Activated CD8-positive, alpha-beta T cell treated with anti-CD3 and anti-CD28 coated beads for 36 hours (primary cell): ENCODE measurements at regions of chr16 and their contacts with region 1.

Region 1: GRCh38 chr16:52191531-52192134 is 355.3 kb downstream of the TOX3 start:
- DNase-seq: peak; percentile 67
- ATAC-seq: no peak
- H3K4me3 Mint-ChIP-seq: no peak overlapping the region
- H3K27ac Mint-ChIP-seq: no peak overlapping the region
- H3K4me1 Mint-ChIP-seq: no peaks in the 10 kb centered on the region
- H3K27me3 Mint-ChIP-seq: no peaks in the 10 kb centered on the region
- CTCF ChIP-seq: peak; percentile 89

Region 2: DNA sequence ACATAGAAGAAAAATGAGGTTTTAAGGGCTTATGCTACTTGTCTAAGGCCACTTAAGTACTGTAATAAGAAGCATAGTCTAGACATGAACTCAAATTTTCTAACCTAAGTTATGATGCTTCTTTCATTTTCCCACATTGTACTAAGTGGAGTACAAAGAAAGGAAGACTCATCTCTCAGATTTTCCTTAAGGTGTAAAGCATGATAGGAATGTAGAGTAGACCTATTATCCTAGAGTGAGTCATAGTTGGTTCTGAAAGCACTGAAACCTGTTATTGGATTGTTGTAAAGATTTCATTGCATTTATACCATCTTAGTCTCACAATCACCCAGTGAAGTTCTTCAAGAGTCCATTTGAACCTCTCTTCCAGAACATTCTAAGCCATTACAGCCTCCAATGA is 11.5 kb after region 1 on chr16:
- CTCF ChIA-PET with region 1: interaction called, 13 read pairs
- POLR2A ChIA-PET with region 1: no interaction called
- intact Hi-C with region 1: no loop called
- DNase-seq: no peak
- ATAC-seq: no peak
- H3K4me3 Mint-ChIP-seq: no peak overlapping the region
- H3K27ac Mint-ChIP-seq: no peak overlapping the region
- H3K4me1 Mint-ChIP-seq: no peaks in the 10 kb centered on the region
- H3K27me3 Mint-ChIP-seq: peaks cover 7% of the 10 kb centered on the region
- CTCF ChIP-seq: no peak

Region 3: DNA sequence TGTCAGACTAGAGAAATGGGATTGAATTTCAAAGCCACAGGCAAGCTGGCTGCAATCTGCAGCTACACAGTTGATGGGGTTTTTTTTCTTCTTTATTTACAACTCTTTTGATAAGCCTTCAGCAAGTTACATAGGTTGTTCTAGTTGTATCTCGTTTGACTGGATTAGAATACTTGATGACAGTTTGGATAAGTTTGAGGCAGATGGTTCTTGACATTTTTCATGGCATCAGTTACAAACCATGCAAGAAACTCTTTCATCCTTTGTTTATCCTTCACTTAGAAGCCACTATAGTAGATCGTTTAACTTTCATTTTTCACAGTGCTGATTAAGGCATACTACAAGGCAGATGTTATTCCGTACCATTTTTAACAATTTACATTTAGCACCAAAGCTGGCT is 116.4 kb after region 1 on chr16:
- CTCF ChIA-PET with region 1: no interaction called
- POLR2A ChIA-PET with region 1: no interaction called
- intact Hi-C with region 1: no loop called
- DNase-seq: no peak
- ATAC-seq: no peak
- H3K4me3 Mint-ChIP-seq: no peak overlapping the region
- H3K27ac Mint-ChIP-seq: no peak overlapping the region
- H3K4me1 Mint-ChIP-seq: peaks cover 6% of the 10 kb centered on the region
- H3K27me3 Mint-ChIP-seq: no peaks in the 10 kb centered on the region
- CTCF ChIP-seq: no peak

Region 4: GRCh38 chr16:52497067-52497816 is 305.6 kb after region 1 on chr16:
- CTCF ChIA-PET with region 1: no interaction called
- POLR2A ChIA-PET with region 1: no interaction called
- intact Hi-C with region 1: no loop called
- DNase-seq: no peak
- ATAC-seq: no peak
- H3K4me3 Mint-ChIP-seq: no peak overlapping the region
- H3K27ac Mint-ChIP-seq: no peak overlapping the region
- H3K4me1 Mint-ChIP-seq: no peaks in the 10 kb centered on the region
- H3K27me3 Mint-ChIP-seq: no peaks in the 10 kb centered on the region
- CTCF ChIP-seq: no peak

Region 5: DNA sequence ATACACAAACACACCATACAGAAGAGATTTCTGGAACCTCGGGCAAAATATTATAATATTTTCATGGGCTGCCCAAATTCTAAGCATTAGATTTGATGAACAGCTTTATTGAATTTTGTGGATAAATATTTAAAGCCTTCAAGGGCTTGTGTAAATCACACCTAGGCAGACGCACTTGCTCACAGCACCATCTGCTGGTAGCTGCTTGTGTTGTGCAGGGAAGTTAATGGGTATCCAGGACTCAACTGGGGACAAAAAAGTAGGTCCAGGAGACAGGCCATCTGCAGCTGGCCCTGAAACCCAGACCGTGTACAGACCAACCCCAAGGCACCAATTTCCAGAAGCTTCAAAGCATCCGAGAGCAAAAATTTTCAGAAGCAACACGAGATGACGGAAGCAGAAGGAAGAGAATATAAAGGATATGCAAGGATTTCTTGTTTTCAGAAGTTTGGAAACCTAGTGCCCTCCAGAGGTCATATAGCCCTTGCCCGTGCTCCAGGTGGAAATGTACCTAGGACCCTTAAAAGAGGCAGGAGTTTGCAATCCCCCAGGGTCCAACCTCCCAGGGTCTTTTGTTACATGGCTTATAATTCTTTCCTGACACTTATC is 721.0 kb after region 1 on chr16:
- CTCF ChIA-PET with region 1: interaction called, 25 read pairs
- POLR2A ChIA-PET with region 1: interaction called, 4 read pairs
- intact Hi-C with region 1: loop called (anchors 5 kb)
- DNase-seq: peak; percentile 66
- ATAC-seq: no peak
- H3K4me3 Mint-ChIP-seq: no peak overlapping the region
- H3K27ac Mint-ChIP-seq: no peak overlapping the region
- H3K4me1 Mint-ChIP-seq: no peaks in the 10 kb centered on the region
- H3K27me3 Mint-ChIP-seq: peaks cover 4% of the 10 kb centered on the region
- CTCF ChIP-seq: peak; percentile 76

Region 6: GRCh38 chr16:53022374-53022773 is 830.7 kb after region 1 on chr16:
- CTCF ChIA-PET with region 1: interaction called, 5 read pairs
- POLR2A ChIA-PET with region 1: no interaction called
- intact Hi-C with region 1: loop called (anchors 10 kb)
- DNase-seq: peak; percentile 12
- ATAC-seq: no peak
- H3K4me3 Mint-ChIP-seq: no peak overlapping the region
- H3K27ac Mint-ChIP-seq: no peak overlapping the region
- H3K4me1 Mint-ChIP-seq: no peaks in the 10 kb centered on the region
- H3K27me3 Mint-ChIP-seq: no peaks in the 10 kb centered on the region
- CTCF ChIP-seq: peak; percentile 30